Transverse colon (tissue), 4 donors: ENCODE measurements at regions of chr18 and their contacts with region 1.

Region 1: GRCh38 chr18:32349728-32350395 is 120.8 kb downstream of the GAREM1 start:
- DNase-seq: peak; percentile 62
- H3K4me3 ChIP-seq: no peak overlapping the region
- H3K27ac ChIP-seq: peak overlapping the region; percentile 47 to 76 (median 48)
- H3K4me1 ChIP-seq: peaks cover 0 to 41% (median 12%) of the 10 kb centered on the region in 4 donors
- H3K27me3 ChIP-seq: no peaks in the 10 kb centered on the region
- CTCF ChIP-seq: no peak
- EP300 ChIP-seq: no peak
- POLR2A ChIP-seq: no peak

Region 2: DNA sequence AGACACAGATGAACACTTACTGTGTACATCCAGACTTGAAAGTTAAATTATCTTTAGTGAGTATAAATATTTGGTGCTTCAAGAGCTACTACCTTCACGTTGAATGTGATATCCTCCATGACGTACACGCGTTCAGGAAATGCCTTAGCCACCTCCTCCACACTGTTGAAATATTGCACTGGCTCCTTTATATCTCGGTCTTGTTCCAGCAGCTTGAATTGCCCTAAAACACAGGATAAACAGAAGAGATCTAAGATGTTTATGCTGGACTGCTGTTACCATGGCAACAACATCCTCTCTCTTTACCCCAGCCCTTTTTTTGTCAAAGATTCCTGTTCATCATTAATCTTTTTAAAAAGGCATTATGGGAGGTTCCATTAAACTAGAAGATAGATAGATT is 39.8 kb before region 1 on chr18:
- in situ Hi-C with region 1: no loop called
- intact Hi-C with region 1: loop called (anchors 5 kb)
- DNase-seq: no peak
- H3K4me3 ChIP-seq: no peak overlapping the region
- H3K27ac ChIP-seq: peak overlapping the region; percentile 49 to 72 (median 70)
- H3K4me1 ChIP-seq: peaks cover 0 to 14% (median 0%) of the 10 kb centered on the region in 4 donors
- H3K27me3 ChIP-seq: no peaks in the 10 kb centered on the region
- CTCF ChIP-seq: no peak
- EP300 ChIP-seq: no peak
- POLR2A ChIP-seq: no peak

Region 3: GRCh38 chr18:32373995-32374394 is 24.1 kb after region 1 on chr18:
- in situ Hi-C with region 1: no loop called
- intact Hi-C with region 1: no loop called
- DNase-seq: peak; percentile 61
- H3K4me3 ChIP-seq: no peak overlapping the region
- H3K27ac ChIP-seq: peak overlapping the region; percentile 84 to 85 (median 84)
- H3K4me1 ChIP-seq: peaks cover 15 to 60% (median 37%) of the 10 kb centered on the region in 4 donors
- H3K27me3 ChIP-seq: no peaks in the 10 kb centered on the region
- CTCF ChIP-seq: no peak
- EP300 ChIP-seq: no peak
- POLR2A ChIP-seq: no peak

Region 4: GRCh38 chr18:33446604-33447003 is 1096.7 kb after region 1 on chr18:
- in situ Hi-C with region 1: no loop called
- intact Hi-C with region 1: no loop called
- DNase-seq: no peak
- H3K4me3 ChIP-seq: no peak overlapping the region
- H3K27ac ChIP-seq: no peak overlapping the region
- H3K4me1 ChIP-seq: no peaks in the 10 kb centered on the region
- H3K27me3 ChIP-seq: peaks cover 4% of the 10 kb centered on the region
- CTCF ChIP-seq: no peak
- EP300 ChIP-seq: no peak
- POLR2A ChIP-seq: no peak